ENCODE measurements at regions of chr3 and their contacts with region 1.

Region 1: GRCh38 chr3:187041362-187042307 is 97.7 kb downstream of the RPL39L start:
- DNase-seq: peak in 1 of 2 experiments; percentile 68
- H3K4me3 ChIP-seq: no peak overlapping the region
- H3K4me3 Mint-ChIP-seq: peak overlapping the region; percentile 18
- H3K27ac Mint-ChIP-seq: peak overlapping the region; percentile 78
- H3K4me1 ChIP-seq: peaks cover 39% of the 10 kb centered on the region
- H3K4me1 Mint-ChIP-seq: peaks cover 42% of the 10 kb centered on the region
- H3K27me3 ChIP-seq: no peaks in the 10 kb centered on the region
- H3K27me3 Mint-ChIP-seq: no peaks in the 10 kb centered on the region
- CTCF ChIP-seq: no peak

Region 2: GRCh38 chr3:186746008-186746407 is 295.6 kb before region 1 on chr3:
- CTCF ChIA-PET with region 1: no interaction called
- POLR2A ChIA-PET with region 1: no interaction called
- intact Hi-C with region 1: loop called (anchors 1 kb)
- DNase-seq: peak; percentile 88 to 93
- H3K4me3 ChIP-seq: no peak overlapping the region
- H3K4me3 Mint-ChIP-seq: peak overlapping the region; percentile 62
- H3K27ac Mint-ChIP-seq: peak overlapping the region; percentile 95
- H3K4me1 ChIP-seq: peaks cover 50% of the 10 kb centered on the region
- H3K4me1 Mint-ChIP-seq: peaks cover 44% of the 10 kb centered on the region
- H3K27me3 ChIP-seq: no peaks in the 10 kb centered on the region
- H3K27me3 Mint-ChIP-seq: no peaks in the 10 kb centered on the region
- CTCF ChIP-seq: no peak

Region 3: GRCh38 chr3:187017511-187018230 is 24.0 kb before region 1 on chr3:
- CTCF ChIA-PET with region 1: no interaction called
- POLR2A ChIA-PET with region 1: no interaction called
- intact Hi-C with region 1: loop called (anchors 2 kb)
- DNase-seq: no peak
- H3K4me3 ChIP-seq: no peak overlapping the region
- H3K4me3 Mint-ChIP-seq: no peak overlapping the region
- H3K27ac Mint-ChIP-seq: no peak overlapping the region
- H3K4me1 ChIP-seq: peaks cover 16% of the 10 kb centered on the region
- H3K4me1 Mint-ChIP-seq: peaks cover 7% of the 10 kb centered on the region
- H3K27me3 ChIP-seq: no peaks in the 10 kb centered on the region
- H3K27me3 Mint-ChIP-seq: no peaks in the 10 kb centered on the region
- CTCF ChIP-seq: no peak

Region 4: DNA sequence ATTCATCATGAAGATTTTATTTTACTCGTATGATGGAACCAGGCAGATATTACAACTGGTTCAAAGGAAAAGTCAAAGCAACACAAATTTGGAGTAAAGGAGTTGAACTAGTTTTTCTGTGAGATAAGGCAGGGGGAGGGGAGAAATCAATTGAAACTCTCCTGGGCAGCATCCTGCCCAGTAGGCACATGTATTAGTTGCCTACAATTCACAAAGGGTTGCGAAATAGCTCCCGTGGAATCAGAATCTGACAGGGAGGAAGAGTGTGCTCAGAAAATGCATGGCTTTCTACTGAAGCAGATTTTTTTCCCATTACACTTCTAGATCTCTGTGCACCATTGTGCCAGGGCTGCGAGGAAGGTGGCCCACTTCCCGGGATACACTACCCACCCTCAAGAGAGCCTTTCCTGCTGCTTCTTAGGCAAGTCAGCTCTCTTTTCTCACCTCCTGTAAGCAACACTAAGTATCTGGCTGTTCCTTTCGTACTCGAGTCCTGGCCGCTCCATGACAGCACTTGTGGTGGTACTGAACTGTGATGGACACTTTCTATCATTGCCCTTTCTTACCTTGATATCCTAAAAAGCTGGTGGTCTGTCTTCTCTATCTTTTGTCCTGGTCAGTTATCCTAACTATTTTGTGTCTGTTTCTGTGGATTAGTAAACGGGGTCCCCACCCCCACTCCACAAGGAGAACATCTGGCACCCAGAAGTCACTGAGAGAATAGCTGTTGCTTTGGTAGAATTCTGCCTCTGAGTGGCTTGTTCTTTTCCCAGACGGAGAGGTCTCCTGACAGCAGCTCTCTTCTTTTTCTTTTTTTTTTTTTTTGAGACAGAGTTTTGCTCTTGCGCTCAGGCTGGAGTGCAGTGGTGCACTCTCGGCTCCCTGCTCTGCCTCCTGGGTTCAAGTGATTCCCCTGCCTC is 22.8 kb after region 1 on chr3:
- CTCF ChIA-PET with region 1: interaction called, 3 read pairs
- POLR2A ChIA-PET with region 1: interaction called, 4 read pairs
- intact Hi-C with region 1: loop called (anchors 1 kb)
- DNase-seq: peak in 1 of 2 experiments; percentile 13
- H3K4me3 ChIP-seq: no peak overlapping the region
- H3K4me3 Mint-ChIP-seq: peak overlapping the region; percentile 52
- H3K27ac Mint-ChIP-seq: peak overlapping the region; percentile 97
- H3K4me1 ChIP-seq: peaks cover 27% of the 10 kb centered on the region
- H3K4me1 Mint-ChIP-seq: peaks cover 28% of the 10 kb centered on the region
- H3K27me3 ChIP-seq: no peaks in the 10 kb centered on the region
- H3K27me3 Mint-ChIP-seq: no peaks in the 10 kb centered on the region
- CTCF ChIP-seq: no peak

Measured in Caco-2 (cell line).